PC-9 (cell line): ENCODE measurements at regions of chr3 and their contacts with region 1.

Region 1: DNA sequence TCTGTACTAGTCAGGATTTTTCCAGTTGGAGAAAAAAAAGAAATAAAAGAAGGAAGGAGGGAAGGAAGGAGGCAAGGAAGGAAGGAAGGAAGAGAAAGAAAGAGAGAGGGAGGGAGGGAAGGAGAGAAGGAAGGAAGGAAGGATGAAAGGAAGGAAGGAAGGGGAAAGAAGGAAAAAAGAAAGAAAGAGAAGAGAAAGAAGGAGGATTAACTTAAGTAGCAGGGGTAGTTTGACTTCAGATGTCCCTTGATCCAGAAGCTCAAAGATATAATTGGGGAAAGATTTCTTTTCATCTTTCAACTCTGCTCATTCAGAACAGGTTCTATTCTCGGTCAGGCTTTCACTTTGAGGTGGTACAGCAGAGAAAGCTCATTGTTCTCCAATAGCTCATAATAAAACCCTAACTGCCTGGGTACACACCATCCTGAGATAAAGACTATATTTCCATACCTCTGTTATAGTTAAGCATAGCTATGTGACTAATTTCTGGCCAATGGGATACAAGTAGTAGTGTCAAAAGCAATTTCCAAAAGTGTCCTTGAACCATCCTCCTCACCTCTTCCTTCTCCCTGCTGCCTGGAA is 23.5 kb upstream of the STT3B start:
- DNase-seq: no peak
- H3K4me3 ChIP-seq: no peak overlapping the region
- H3K27ac ChIP-seq: no peak overlapping the region
- H3K4me1 ChIP-seq: no peaks in the 10 kb centered on the region
- H3K27me3 ChIP-seq: no peaks in the 10 kb centered on the region
- CTCF ChIP-seq: no peak

Region 2: GRCh38 chr3:31485196-31485595 is 24.0 kb before region 1 on chr3:
- CTCF ChIA-PET with region 1: no interaction called
- POLR2A ChIA-PET with region 1: no interaction called
- intact Hi-C with region 1: no loop called
- DNase-seq: no peak
- H3K4me3 ChIP-seq: no peak overlapping the region
- H3K27ac ChIP-seq: no peak overlapping the region
- H3K4me1 ChIP-seq: no peaks in the 10 kb centered on the region
- H3K27me3 ChIP-seq: no peaks in the 10 kb centered on the region
- CTCF ChIP-seq: no peak

Region 3: GRCh38 chr3:31622636-31623288 is 113.5 kb after region 1 on chr3:
- CTCF ChIA-PET with region 1: no interaction called
- POLR2A ChIA-PET with region 1: interaction called, 17 read pairs
- intact Hi-C with region 1: no loop called
- DNase-seq: no peak
- H3K4me3 ChIP-seq: no peak overlapping the region
- H3K27ac ChIP-seq: no peak overlapping the region
- H3K4me1 ChIP-seq: no peaks in the 10 kb centered on the region
- H3K27me3 ChIP-seq: no peaks in the 10 kb centered on the region
- CTCF ChIP-seq: no peak